ENCODE measurements at regions of chr5 and their contacts with region 1.

Region 1: DNA sequence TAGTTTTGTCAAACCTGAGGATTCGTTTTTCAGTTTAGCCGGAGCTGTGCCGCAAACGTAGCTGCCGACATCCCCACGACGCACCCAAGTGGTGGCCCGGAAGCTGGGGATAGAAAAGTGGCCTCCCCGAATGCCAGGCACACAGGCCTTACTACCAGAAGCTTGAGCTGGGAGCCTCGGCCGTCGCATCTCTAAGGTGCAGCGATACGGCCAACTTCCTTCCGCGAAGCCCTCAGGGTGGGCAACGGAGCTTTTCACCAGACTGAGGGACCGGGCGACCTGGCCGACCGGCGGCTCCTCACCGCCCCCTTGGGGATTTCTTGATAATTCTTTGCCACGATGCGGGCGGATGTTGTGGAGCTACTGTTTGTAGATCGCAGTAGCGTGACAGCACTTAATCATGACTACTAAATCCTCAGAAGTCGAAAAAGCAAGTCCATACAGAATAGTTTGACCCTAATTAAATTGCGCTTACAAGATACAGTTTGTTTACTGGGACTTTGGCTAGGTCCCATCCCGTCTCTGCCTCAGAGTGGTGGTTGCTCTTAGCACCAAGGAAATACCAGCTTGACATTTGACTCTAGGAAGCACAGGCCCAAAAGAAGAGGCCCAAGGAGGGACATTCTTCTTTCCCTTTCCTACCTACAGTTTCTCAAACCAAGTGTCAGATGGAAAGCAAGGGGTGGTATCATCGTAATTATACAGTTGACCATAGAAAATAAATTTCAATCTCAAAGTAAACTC is 613 bp upstream of the TMEM267 start:
- DNase-seq: peak; percentile 78
- ATAC-seq: peak; percentile 72
- H3K4me3 Mint-ChIP-seq: peak overlapping the region; percentile 95
- H3K27ac Mint-ChIP-seq: peak overlapping the region; percentile 100
- H3K4me1 Mint-ChIP-seq: peaks cover 33% of the 10 kb centered on the region
- H3K27me3 Mint-ChIP-seq: no peaks in the 10 kb centered on the region
- CTCF ChIP-seq: no peak

Region 2: GRCh38 chr5:42908509-42909488 is 575.5 kb before region 1 on chr5:
- CTCF ChIA-PET with region 1: interaction called, 4 read pairs
- POLR2A ChIA-PET with region 1: no interaction called
- intact Hi-C with region 1: loop called (anchors 1 kb)
- DNase-seq: peak; percentile 71
- ATAC-seq: peak; percentile 94
- H3K4me3 Mint-ChIP-seq: peak overlapping the region; percentile 93
- H3K27ac Mint-ChIP-seq: peak overlapping the region; percentile 84
- H3K4me1 Mint-ChIP-seq: peaks cover 12% of the 10 kb centered on the region
- H3K27me3 Mint-ChIP-seq: peaks cover 11% of the 10 kb centered on the region
- CTCF ChIP-seq: peak; percentile 50

Region 3: GRCh38 chr5:43019614-43020293 is 464.5 kb before region 1 on chr5:
- CTCF ChIA-PET with region 1: no interaction called
- POLR2A ChIA-PET with region 1: interaction called, 12 read pairs
- intact Hi-C with region 1: no loop called
- DNase-seq: peak; percentile 61
- ATAC-seq: peak; percentile 64
- H3K4me3 Mint-ChIP-seq: peak overlapping the region; percentile 97
- H3K27ac Mint-ChIP-seq: peak overlapping the region; percentile 100
- H3K4me1 Mint-ChIP-seq: peaks cover 39% of the 10 kb centered on the region
- H3K27me3 Mint-ChIP-seq: no peaks in the 10 kb centered on the region
- CTCF ChIP-seq: no peak

Region 4: GRCh38 chr5:43120720-43121564 is 363.3 kb before region 1 on chr5 and contains the start of gene ZNF131:
- CTCF ChIA-PET with region 1: interaction called, 6 read pairs
- POLR2A ChIA-PET with region 1: interaction called, 126 read pairs
- intact Hi-C with region 1: loop called (anchors 1 kb)
- DNase-seq: peak; percentile 99
- ATAC-seq: peak; percentile 86
- H3K4me3 Mint-ChIP-seq: peak within 1 kb of the TSS; percentile 90
- H3K27ac Mint-ChIP-seq: peak within 1 kb of the TSS; percentile 94
- H3K4me1 Mint-ChIP-seq: peaks cover 38% of the 10 kb centered on the region
- H3K27me3 Mint-ChIP-seq: no peaks in the 10 kb centered on the region
- CTCF ChIP-seq: no peak
- total RNA-seq, gene ZNF131: 50.8 and 57.6 TPM in 2 replicates

Region 5: GRCh38 chr5:43313035-43313853 is 171.0 kb before region 1 on chr5 and contains the start of gene HMGCS1:
- CTCF ChIA-PET with region 1: interaction called, 18 read pairs
- POLR2A ChIA-PET with region 1: interaction called, 117 read pairs
- intact Hi-C with region 1: loop called (anchors 1 kb)
- DNase-seq: peak; percentile 98
- ATAC-seq: peak; percentile 86
- H3K4me3 Mint-ChIP-seq: peak within 1 kb of the TSS; percentile 99
- H3K27ac Mint-ChIP-seq: peak within 1 kb of the TSS; percentile 95
- H3K4me1 Mint-ChIP-seq: peaks cover 55% of the 10 kb centered on the region
- H3K27me3 Mint-ChIP-seq: no peaks in the 10 kb centered on the region
- CTCF ChIP-seq: no peak
- total RNA-seq, gene HMGCS1: 133 and 160 TPM in 2 replicates

Region 6: DNA sequence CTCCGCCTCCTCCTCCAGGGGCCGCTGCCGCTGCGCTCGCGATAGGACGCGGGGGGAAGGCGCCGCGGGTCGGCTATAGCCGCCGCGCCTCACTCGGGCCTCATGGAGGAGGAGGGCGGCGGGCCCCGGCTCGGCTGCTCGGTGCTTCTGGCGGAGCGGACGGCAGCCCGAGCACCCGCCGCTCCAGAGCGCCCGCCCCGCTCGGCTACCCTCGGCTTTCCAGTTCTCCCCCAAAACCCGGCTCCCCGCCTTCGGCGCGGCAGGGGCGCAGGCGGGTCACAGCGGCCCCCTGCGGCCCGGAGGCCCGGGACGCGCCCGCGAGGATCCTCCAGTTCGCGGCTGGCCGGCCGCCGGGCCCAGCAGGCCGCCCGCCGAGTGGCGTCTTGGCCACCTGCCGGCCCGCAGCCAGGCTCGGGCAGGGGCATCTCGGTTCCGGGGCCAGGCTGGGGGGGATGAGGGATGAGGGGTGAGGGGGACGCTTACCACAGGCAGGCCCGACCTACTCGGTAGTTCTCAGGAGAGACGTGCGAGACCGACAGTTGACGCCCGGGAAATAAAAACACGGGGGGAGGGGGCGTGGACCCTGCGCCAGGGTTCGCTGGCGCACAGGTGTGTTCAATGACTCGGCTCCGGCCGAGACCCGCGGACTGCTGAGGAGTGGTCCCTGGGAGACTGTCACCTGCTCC is 72.7 kb after region 1 on chr5 and contains the start of gene PAIP1:
- CTCF ChIA-PET with region 1: interaction called, 19 read pairs
- POLR2A ChIA-PET with region 1: interaction called, 59 read pairs
- intact Hi-C with region 1: loop called (anchors 1 kb)
- DNase-seq: peak; percentile 90
- ATAC-seq: peak; percentile 93
- H3K4me3 Mint-ChIP-seq: peak within 1 kb of the TSS; percentile 89
- H3K27ac Mint-ChIP-seq: peak within 1 kb of the TSS; percentile 94
- H3K4me1 Mint-ChIP-seq: peaks cover 21% of the 10 kb centered on the region
- H3K27me3 Mint-ChIP-seq: no peaks in the 10 kb centered on the region
- CTCF ChIP-seq: peak; percentile 41
- total RNA-seq, gene PAIP1: 35.1 and 38.3 TPM in 2 replicates